Ovary (tissue), 10 donors: ENCODE measurements at regions of chr4 and their contacts with region 1.

Region 1: DNA sequence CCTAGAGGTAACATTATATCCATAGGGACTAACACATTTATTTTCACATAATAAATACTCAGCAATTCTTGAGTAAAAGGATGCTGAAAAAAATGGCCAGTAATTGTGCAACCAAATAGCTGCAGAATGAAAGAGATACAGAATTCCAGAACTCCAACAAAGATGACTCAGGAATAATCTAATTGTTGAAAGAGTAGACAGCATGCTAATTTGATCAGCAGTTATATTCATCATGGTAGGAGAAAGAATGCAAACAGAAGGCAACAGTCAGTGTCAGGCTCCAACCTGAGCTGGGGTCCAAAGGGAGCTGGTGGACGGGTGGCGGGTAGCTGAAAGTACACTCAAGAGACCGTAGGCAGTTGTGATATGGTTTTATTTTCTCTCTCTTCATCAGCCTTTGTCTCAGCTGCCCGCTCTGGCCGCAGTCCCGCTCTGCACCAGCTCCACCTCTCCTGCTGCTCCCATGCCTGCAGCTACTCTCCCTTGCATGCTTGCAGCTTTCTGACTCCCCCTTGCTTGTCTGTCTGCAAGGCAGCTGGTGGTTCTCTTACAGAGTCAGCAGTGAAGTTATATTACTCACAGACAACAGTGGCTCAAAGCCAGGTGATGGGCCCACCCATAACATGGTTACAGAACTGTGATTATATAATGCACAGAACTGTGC is 1150.1 kb downstream of the STIM2 start:
- DNase-seq: no peak
- H3K4me3 ChIP-seq: no peak overlapping the region
- H3K27ac ChIP-seq: no peak overlapping the region
- H3K4me1 ChIP-seq: no peaks in the 10 kb centered on the region
- H3K27me3 ChIP-seq: no peaks in the 10 kb centered on the region
- CTCF ChIP-seq: no peak
- EP300 ChIP-seq: no peak
- POLR2A ChIP-seq: no peak

Region 2: DNA sequence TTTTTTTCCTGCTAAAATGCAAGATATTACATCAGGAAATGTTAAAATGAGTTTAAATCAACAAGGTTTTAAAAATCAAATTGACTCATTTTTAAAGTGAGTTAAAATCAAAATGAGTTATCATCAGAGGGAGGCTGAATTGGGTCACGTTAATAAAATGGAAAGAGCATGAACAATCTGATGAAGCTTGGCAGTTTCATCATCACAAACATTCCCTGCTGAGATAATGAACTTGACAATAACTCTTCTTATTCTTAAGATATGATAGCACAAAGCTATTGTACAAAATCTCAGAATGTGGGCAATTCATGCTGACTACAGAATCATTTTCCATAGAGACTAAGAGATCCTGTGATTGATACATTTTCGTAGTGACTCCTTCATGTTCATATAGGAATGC is 63.4 kb before region 1 on chr4:
- intact Hi-C with region 1: loop called in 1 of 4 experiments (anchors 10 kb)
- DNase-seq: no peak
- H3K4me3 ChIP-seq: no peak overlapping the region
- H3K27ac ChIP-seq: no peak overlapping the region
- H3K4me1 ChIP-seq: no peaks in the 10 kb centered on the region
- H3K27me3 ChIP-seq: no peaks in the 10 kb centered on the region
- CTCF ChIP-seq: no peak
- EP300 ChIP-seq: no peak
- POLR2A ChIP-seq: no peak